GM13977 (cell line): ENCODE measurements at regions of chr14 and their contacts with region 1.

Region 1: GRCh38 chr14:75307700-75308379 is 29.2 kb downstream of the FOS start:
- DNase-seq: peak; percentile 56
- CTCF ChIP-seq: peak; percentile 96

Region 2: GRCh38 chr14:75132382-75133086 is 175.3 kb before region 1 on chr14:
- in situ Hi-C with region 1: loop called (anchors 5 kb)
- DNase-seq: peak; percentile 43
- CTCF ChIP-seq: peak; percentile 79

Region 3: GRCh38 chr14:75487155-75487671 is 179.4 kb after region 1 on chr14:
- in situ Hi-C with region 1: loop called (anchors 10 kb)
- DNase-seq: peak; percentile 59
- CTCF ChIP-seq: no peak

Region 4: DNA sequence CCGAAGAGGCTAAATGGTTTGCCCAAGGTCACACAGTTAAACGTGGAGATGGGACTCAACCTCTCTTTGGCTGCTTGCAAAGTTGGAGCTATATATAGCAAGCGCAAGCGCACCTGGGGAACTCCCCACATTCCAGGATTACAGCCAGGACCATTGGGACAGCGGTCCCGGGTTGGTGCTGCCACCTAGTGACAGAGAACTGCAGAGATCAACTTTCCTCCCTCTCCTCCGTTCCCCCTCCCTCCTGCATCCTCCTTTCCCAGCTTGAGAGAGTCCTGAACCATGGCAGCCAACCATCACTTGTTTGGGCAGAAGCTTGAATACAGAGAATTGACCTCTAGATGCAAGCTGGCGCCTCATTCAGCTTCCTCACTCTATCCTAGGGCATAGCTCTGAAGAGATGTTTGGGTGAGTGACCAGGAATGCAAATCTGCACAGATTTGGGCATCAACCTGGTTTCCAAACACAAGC is 253.2 kb after region 1 on chr14:
- in situ Hi-C with region 1: loop called (anchors 5 kb)
- DNase-seq: no peak
- CTCF ChIP-seq: peak; percentile 81

Region 5: GRCh38 chr14:75654127-75654732 is 346.4 kb after region 1 on chr14:
- in situ Hi-C with region 1: loop called (anchors 10 kb)
- DNase-seq: peak; percentile 71
- CTCF ChIP-seq: peak; percentile 93

Region 6: DNA sequence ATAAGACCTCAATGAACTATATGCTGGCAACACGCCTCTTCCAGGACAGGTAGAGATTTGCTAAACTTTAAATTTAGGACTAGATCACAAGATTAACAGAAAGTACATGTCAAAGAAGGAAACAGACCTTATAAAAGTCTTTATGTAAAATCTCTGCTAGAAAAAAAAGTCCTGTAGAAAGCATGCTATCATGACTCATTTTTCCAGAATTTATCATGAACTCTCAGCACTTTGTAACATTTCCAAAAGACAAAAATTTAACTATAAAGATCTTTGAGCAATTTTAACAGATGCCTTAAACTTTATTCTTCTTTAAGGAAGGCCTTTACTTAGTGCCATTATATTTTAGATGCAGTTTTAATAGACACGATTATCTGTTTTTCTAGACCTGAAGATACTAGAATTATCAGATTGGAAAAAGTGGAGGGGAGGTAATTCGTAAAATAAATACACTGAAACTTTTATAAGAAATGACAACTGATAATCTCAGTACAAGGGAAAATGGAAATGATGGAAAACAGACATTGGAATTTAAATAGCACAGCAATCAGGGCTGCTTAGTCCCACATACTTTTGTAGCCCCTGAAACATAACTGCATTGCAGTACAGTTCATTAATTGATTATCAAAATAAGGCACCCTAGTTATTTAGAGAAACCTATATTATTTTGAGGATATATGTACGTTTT is 445.2 kb after region 1 on chr14:
- in situ Hi-C with region 1: no loop called
- DNase-seq: no peak
- CTCF ChIP-seq: no peak